Transverse colon (tissue), 4 donors: ENCODE measurements at regions of chr9 and their contacts with region 1.

Region 1: DNA sequence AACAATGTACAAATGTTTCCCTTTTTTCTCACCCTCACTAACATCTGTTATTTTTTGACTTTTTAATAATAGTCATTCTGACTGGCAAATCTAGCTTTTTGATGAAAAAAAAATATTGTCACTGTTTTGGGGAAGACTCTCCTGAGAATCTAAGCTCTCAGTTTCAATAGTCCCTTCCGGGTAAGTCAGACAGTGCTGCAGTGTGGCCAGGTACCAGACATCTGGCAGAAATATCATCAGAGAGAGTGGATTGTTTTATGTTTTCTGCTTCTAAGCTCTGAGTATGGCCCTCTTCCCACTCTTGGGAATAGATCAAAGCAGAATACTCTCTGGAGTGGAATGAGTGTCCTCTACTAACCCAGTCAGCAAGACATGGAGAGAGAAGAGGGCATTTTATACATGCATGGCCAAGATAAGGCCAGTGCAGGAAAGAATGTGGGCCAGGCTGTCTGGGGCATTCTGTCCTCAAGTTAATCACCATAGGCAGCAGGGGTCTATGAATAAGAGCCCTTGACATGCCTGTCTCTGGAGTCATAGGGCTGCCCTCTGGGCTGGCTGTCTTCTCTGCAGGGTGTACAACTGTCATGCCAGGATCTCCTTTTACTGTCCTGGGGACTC is 38.5 kb upstream of the OR2S2 start:
- DNase-seq: no peak
- H3K4me3 ChIP-seq: no peak overlapping the region
- H3K27ac ChIP-seq: no peak overlapping the region
- H3K4me1 ChIP-seq: no peaks in the 10 kb centered on the region
- H3K27me3 ChIP-seq: peaks cover 6% of the 10 kb centered on the region
- CTCF ChIP-seq: no peak
- EP300 ChIP-seq: no peak
- POLR2A ChIP-seq: no peak

Region 2: DNA sequence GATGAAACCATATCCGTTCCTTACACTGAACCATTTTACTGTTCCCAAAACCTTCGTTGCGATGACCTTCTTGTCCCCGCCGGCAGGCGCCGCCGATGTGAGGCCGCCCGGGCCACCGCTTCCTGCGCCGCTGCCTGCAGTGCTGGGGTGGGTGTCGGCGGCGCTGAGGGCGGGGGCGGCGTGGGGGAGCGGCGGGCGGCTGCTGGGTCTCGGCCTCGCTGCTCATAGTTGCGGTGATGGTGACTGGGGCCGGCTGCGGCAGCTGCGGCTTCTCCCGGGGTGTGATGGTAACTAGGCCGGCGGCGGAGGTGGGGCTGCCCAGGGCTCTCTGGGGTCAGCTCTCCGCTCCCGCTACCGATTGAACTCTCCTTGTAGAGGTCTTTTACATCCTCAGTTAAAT is 24.4 kb before region 1 on chr9:
- in situ Hi-C with region 1: no loop called
- intact Hi-C with region 1: loop called (anchors 1 kb)
- DNase-seq: no peak
- H3K4me3 ChIP-seq: peak overlapping the region in 1 of 4 donors; percentile 26
- H3K27ac ChIP-seq: no peak overlapping the region
- H3K4me1 ChIP-seq: peaks cover 0 to 14% (median 4%) of the 10 kb centered on the region in 4 donors
- H3K27me3 ChIP-seq: peaks cover 39% of the 10 kb centered on the region
- CTCF ChIP-seq: no peak
- EP300 ChIP-seq: no peak
- POLR2A ChIP-seq: no peak

Region 3: DNA sequence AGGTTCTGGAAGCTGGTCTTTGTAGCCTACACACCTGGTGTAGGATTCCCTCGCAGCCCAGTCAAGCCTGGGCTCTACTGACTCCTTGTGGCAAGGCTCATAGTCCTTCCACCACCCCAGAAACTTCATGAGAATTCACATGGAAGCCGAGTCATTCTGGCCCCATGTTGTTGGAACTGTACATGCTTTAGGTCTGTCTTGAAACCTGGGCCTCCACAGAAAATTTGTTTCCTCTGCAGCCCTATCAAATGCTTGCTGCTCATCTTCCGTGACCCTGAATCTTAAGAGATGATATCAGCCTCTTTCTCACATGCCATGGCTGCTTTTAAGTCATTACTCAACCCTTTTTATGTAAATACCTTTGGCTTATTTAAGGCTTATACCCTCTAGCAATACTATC is 1312.7 kb after region 1 on chr9:
- in situ Hi-C with region 1: no loop called
- intact Hi-C with region 1: loop called (anchors 10 kb)
- DNase-seq: peak; percentile 23
- H3K4me3 ChIP-seq: no peak overlapping the region
- H3K27ac ChIP-seq: no peak overlapping the region
- H3K4me1 ChIP-seq: no peaks in the 10 kb centered on the region
- H3K27me3 ChIP-seq: no peaks in the 10 kb centered on the region
- CTCF ChIP-seq: no peak
- EP300 ChIP-seq: no peak
- POLR2A ChIP-seq: no peak